PC-9 (cell line): ENCODE measurements at regions of chr10 and their contacts with region 1.

Region 1: DNA sequence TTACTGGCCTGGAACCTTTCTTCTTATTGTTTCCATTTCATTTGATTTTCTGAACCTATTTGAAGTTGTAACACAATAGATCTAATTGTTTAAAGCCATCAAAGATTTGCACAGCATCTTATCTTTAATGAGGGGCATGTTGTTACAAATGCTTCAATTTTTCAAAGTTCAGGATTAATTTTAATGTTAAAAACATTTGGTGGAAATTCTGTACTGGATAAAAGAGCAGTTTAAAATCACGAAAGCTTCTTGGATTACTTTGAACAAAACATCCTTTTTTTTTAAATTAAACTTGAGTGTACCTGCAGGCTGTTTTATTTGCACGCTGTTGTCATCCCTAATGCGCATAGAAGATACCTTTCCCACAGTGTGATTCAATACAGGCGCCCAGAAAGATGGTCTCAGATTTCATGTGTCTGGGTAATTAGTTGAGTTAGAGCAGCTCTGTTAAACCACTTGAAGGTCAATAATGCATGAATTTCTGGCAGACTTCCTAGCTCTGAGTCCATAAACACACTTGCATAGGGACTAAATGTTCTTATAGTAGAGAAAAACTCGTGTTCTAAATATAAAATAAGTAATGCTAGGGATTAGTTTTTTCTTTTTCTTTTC is 29.3 kb upstream of the DDX50 start:
- DNase-seq: peak in 1 of 2 experiments; percentile 80
- H3K4me3 ChIP-seq: no peak overlapping the region
- H3K27ac ChIP-seq: no peak overlapping the region
- H3K4me1 ChIP-seq: peaks cover 11% of the 10 kb centered on the region
- H3K27me3 ChIP-seq: no peaks in the 10 kb centered on the region
- CTCF ChIP-seq: no peak

Region 2: GRCh38 chr10:68813559-68813958 is 58.3 kb before region 1 on chr10:
- CTCF ChIA-PET with region 1: no interaction called
- POLR2A ChIA-PET with region 1: interaction called, 12 read pairs
- intact Hi-C with region 1: no loop called
- DNase-seq: no peak
- H3K4me3 ChIP-seq: no peak overlapping the region
- H3K27ac ChIP-seq: no peak overlapping the region
- H3K4me1 ChIP-seq: peaks cover 20% of the 10 kb centered on the region
- H3K27me3 ChIP-seq: no peaks in the 10 kb centered on the region
- CTCF ChIP-seq: no peak

Region 3: DNA sequence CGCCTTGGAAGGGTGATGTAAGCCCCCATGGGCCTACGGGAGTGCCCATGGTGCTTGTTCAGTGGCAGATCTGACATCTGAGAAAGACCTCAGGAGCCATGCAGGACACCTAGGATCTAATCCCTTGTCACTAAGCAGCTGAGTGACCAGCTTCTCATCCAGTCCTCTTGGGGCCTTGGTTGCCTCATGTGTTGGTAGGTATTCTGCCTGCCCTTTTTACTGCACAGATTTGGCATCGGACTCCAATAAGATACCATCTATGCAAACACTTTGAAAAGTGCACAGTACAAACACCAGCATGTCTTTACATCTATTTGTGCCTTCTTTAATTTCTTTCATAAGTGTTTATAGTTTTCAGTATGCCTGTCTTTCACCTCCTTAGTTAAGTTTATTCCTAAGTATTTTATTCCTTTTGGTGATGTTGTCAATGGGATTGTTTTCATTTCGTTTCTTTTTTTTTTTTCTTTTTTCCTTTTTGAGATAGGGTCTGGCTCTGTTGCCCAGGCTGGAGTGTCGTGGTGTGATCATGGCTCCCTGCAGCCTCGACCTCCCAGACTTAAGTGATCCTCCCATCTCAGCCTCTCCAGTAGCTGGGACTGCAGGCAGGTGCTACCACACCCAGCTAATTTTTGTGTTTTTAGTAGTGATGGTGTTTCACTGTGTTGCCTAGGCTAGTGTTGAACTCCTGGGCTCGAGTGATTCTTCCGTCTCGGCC is 34.1 kb before region 1 on chr10:
- CTCF ChIA-PET with region 1: no interaction called
- POLR2A ChIA-PET with region 1: interaction called, 10 read pairs
- intact Hi-C with region 1: no loop called
- DNase-seq: no peak
- H3K4me3 ChIP-seq: no peak overlapping the region
- H3K27ac ChIP-seq: no peak overlapping the region
- H3K4me1 ChIP-seq: no peaks in the 10 kb centered on the region
- H3K27me3 ChIP-seq: no peaks in the 10 kb centered on the region
- CTCF ChIP-seq: no peak